ENCODE measurements at regions of chr9 and their contacts with region 1.

Region 1: DNA sequence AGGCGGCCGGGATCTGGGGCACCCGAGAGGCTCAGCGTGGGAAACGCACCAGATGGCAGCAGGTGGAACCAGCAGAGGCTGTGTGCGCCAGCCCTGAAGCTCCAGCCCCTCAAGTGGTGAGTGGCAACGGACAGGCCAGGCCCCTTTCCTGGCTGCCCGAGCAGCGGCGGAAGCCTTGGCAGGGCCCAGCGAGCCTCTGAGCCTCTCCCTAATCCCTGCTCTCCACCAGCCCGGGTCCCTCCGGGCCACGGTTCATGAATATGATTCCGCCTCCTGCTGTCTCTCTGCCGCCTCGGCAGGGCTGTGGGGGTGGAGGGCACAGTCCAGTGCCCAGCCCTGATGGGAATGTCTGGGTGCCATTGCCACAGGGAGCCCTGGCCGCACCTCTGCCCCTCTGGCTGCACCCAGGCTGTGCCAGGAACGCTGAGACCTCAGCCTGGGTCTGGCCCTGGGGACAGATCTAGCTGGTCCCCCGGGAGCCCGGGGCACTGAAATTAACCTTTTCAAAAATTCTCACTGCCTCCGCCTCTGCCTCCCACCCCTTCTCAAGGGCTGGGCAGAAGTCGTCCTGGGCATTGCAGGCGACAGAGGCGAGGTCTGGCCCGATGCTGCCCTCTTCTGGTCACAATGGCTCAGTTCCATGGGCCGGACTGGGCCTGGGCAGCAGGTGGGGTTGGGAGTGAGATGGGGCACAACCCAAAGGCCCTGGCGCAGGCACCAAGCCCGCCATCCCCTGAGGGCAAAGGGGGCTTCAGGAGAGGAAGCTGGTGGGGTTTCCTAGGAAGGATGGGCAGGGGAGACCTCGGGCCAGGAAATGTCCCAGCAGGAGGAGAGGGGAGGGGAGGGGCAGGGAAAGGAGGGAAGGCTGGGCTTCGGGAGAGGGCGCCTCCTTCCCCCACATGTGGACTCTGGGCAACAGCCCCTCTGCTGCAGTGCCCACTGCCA is 20.3 kb downstream of the CCDC187 start:
- DNase-seq: peak; percentile 94
- H3K4me3 ChIP-seq: peak overlapping the region in 1 of 2 experiments; percentile 43; a peak in 1 of 4 replicates
- H3K27ac ChIP-seq: no peak overlapping the region
- H3K4me1 ChIP-seq: peaks cover 0 to 11% of the 10 kb centered on the region in 2 experiments; a peak in 2 of 4 replicates
- H3K27me3 ChIP-seq: peaks cover 41% of the 10 kb centered on the region
- CTCF ChIP-seq: peak; percentile 83
- EP300 ChIP-seq: no peak
- RAD21 ChIP-seq: peak; percentile 85

Region 2: DNA sequence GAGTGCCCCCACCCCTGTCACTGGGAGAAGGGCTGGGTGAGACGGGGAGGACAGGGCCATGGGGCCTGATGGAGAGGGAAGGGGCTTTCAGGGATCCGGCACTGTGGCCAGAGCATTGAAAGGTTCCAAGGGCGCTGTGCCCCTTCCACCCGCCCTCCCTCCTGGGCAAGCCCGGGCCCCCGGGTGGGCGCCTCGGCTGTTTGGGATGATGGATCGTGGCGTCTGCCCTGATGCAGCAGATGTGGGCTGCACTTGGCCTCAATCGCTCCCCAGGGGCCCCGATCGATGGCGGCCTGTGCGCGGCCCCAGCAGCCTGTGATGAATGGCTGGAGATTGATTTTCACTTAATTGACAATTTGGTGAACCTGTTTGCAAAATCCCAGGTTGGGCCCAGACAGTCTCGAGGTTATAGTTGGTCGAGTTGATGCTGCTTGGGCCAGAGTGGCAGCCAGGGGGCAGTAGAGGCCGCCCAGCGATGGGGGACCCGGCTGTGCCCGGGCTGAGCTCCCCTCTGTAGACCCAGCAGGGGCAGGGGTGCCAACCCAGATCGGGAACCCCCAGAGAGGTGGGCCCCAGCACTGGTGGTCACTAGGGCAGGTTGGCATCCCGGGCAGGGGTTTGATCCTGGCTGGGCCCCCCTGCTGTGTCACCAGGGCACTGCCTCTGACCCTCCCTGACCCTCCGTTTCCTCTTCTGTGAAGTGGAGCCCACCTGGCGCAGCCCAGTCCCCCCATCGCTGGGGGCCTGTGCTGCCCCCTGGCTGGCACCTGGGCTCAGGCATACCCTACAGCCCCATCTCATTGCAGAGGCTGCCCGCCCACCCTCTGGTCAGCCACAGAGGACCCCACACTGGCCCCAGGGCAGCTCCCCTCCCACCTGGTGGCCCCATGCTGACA is 113.3 kb before region 1 on chr9:
- CTCF ChIA-PET with region 1: interaction called, 59 read pairs
- POLR2A ChIA-PET with region 1: no interaction called
- DNase-seq: peak; percentile 89
- H3K4me3 ChIP-seq: peak overlapping the region in 1 of 2 experiments; percentile 48; a peak in 1 of 4 replicates
- H3K27ac ChIP-seq: no peak overlapping the region
- H3K4me1 ChIP-seq: no peaks in the 10 kb centered on the region
- H3K27me3 ChIP-seq: peaks cover 43% of the 10 kb centered on the region; the same call in 1 of the 2 replicates
- CTCF ChIP-seq: peak; percentile 77
- EP300 ChIP-seq: no peak
- RAD21 ChIP-seq: peak; percentile 74

Region 3: GRCh38 chr9:136185596-136186366 is 97.8 kb before region 1 on chr9:
- CTCF ChIA-PET with region 1: interaction called, 22 read pairs
- POLR2A ChIA-PET with region 1: no interaction called
- DNase-seq: no peak
- H3K4me3 ChIP-seq: no peak overlapping the region
- H3K27ac ChIP-seq: no peak overlapping the region
- H3K4me1 ChIP-seq: no peaks in the 10 kb centered on the region
- H3K27me3 ChIP-seq: peaks cover 94% of the 10 kb centered on the region
- CTCF ChIP-seq: no peak
- EP300 ChIP-seq: no peak
- RAD21 ChIP-seq: no peak

Region 4: DNA sequence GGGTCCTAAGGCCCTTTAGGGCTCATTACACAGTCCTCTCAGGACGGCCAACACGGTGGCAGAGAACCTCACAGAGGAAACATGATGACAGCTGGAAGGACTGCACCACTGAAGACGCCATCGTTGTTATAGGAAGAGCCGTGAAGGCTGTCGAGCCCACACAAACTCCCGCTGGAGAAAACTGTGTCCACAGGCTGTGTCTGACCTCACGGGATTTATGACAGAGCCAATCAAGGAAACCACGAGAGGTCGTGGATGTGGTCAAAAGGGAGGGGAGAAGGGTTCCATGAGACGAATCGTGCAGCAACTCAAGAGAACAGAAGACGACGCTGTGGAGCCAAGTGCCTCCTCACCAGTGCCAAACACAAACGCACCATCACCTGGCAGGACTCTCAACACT is 50.2 kb before region 1 on chr9:
- CTCF ChIA-PET with region 1: interaction called, 15 read pairs
- POLR2A ChIA-PET with region 1: no interaction called
- DNase-seq: no peak
- H3K4me3 ChIP-seq: no peak overlapping the region
- H3K27ac ChIP-seq: no peak overlapping the region
- H3K4me1 ChIP-seq: peaks cover 0 to 6% of the 10 kb centered on the region in 2 experiments; a peak in 1 of 4 replicates
- H3K27me3 ChIP-seq: no peaks in the 10 kb centered on the region
- CTCF ChIP-seq: no peak
- EP300 ChIP-seq: no peak
- RAD21 ChIP-seq: no peak

Region 5: DNA sequence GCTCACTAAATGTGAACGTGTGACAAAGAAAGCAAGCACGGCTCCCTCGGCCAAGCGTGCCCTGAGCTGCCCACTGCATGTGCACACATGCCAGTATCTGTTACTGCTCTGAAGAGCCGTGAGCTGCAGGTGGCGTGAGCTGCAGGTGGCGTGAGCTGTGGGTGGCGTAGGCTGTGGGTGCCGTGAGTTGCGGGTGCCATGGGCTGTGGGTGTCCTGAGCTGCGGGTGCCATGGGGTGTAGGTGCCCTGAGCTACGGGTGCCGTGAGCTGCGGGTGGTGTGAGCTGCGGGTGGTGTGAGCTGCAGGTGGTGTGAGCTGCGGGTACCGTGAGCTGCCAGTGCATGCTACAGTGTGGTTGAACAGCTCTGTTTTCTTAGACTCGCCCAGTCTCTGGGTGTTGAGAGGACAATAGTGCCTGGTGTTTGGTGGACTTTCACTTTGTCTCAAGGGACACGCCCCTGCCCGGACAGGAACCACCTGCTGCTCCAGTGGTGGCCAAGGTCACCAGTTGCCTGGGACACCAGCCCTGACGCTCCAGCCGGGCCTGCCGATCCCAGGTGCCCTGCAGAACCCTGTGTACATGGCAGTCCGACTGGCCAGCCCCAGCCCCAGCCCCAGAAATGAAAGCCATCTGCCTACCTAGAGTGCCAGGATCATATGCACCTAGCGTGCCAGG is 13.6 kb after region 1 on chr9:
- CTCF ChIA-PET with region 1: interaction called, 14 read pairs
- POLR2A ChIA-PET with region 1: interaction called, 3 read pairs
- DNase-seq: no peak
- H3K4me3 ChIP-seq: no peak overlapping the region
- H3K27ac ChIP-seq: no peak overlapping the region
- H3K4me1 ChIP-seq: peaks cover 0 to 6% of the 10 kb centered on the region in 2 experiments; a peak in 1 of 4 replicates
- H3K27me3 ChIP-seq: peaks cover 7% of the 10 kb centered on the region; the same call in 1 of the 2 replicates
- CTCF ChIP-seq: no peak
- EP300 ChIP-seq: no peak
- RAD21 ChIP-seq: no peak

Region 6: DNA sequence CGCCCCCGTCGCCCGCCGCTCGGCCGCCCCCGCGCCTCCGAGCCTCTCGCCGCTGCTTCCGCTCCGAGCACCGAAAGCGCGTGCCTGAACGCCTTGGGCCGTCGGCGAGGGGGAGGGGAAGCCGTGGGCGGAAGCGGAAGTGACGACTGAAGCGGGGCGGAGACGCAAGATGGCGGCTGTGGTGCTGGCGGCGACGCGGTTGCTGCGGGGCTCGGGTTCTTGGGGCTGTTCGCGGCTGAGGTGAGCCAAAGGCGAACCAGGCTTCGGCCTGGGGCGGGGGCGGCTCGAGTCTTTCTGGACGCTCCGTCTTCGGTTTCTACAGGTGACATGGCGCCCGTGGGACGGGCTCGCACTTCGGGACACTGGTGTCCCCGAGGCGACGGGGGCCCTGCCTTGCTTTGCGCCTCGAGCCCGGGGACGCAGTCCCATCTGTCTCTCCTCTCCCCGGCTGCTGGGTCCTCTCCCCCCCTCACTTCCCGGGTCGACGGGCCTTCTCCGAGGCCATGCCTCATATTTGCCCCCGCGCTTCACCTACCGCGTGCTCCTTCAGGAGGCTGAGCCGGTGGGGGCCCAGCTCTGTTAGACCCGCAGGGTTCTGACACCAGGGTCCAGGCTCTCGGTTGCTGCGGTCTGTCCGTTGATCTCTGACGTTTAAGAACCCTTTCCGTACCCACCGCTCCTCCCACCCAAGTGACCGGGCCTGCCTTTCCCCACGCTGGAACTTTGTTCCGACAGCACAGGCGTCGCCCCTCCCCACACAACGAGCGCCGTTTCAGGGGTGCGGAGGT is 127.1 kb after region 1 on chr9 and contains the starts of genes ENTR1 and PMPCA:
- CTCF ChIA-PET with region 1: no interaction called
- POLR2A ChIA-PET with region 1: no interaction called
- DNase-seq: peak; percentile 99
- H3K4me3 ChIP-seq: peak within 1 kb of the TSS; percentile 92 to 98
- H3K27ac ChIP-seq: peak within 1 kb of the TSS; percentile 62 to 67; a peak in 3 of 4 replicates
- H3K4me1 ChIP-seq: peaks cover 16 to 24% of the 10 kb centered on the region in 2 experiments
- H3K27me3 ChIP-seq: no peaks in the 10 kb centered on the region
- CTCF ChIP-seq: no peak
- EP300 ChIP-seq: no peak
- RAD21 ChIP-seq: no peak
- polyA plus RNA-seq, gene ENTR1: 71.3 and 75.0 TPM in 2 replicates
- polyA plus RNA-seq, gene PMPCA: 125 and 134 TPM in 2 replicates

Measured in SK-N-SH (cell line).